Activated B cell treated with CpG ODN at 0.5 μM for 24 hours (primary cell): ENCODE measurements at regions of chr9 and their contacts with region 1.

Region 1: GRCh38 chr9:8924562-8924961 is 1125.0 kb upstream of the DMAC1 start:
- DNase-seq: no peak
- ATAC-seq: no peak
- H3K4me3 Mint-ChIP-seq: no peak overlapping the region
- H3K27ac Mint-ChIP-seq: no peak overlapping the region
- H3K4me1 Mint-ChIP-seq: no peaks in the 10 kb centered on the region
- H3K27me3 Mint-ChIP-seq: no peaks in the 10 kb centered on the region
- CTCF ChIP-seq: no peak

Region 2: DNA sequence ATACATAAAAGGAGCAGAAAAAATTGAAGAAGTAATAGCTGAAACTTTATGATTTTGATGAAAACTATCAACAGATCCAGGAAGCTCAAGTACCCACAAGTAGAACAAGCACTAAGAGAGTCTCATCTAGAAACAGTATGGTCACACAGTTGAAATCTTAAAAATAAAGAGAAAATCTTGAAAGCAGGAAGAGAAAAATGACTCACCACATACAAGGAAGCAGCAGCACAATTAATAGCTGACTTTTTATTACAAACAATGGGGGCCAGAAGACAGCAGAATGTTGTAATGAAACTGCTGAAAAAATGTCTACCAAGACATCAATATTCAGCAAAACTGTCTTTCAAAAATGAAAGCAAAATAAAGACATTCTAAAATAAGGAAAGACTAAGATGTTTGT is 16.7 kb before region 1 on chr9:
- CTCF ChIA-PET with region 1: no interaction called
- POLR2A ChIA-PET with region 1: no interaction called
- intact Hi-C with region 1: no loop called
- DNase-seq: no peak
- ATAC-seq: no peak
- H3K4me3 Mint-ChIP-seq: no peak overlapping the region
- H3K27ac Mint-ChIP-seq: no peak overlapping the region
- H3K4me1 Mint-ChIP-seq: no peaks in the 10 kb centered on the region
- H3K27me3 Mint-ChIP-seq: no peaks in the 10 kb centered on the region
- CTCF ChIP-seq: no peak

Region 3: GRCh38 chr9:8978334-8978733 is 53.8 kb after region 1 on chr9:
- CTCF ChIA-PET with region 1: no interaction called
- POLR2A ChIA-PET with region 1: no interaction called
- intact Hi-C with region 1: loop called (anchors 5 kb)
- DNase-seq: no peak
- ATAC-seq: no peak
- H3K4me3 Mint-ChIP-seq: no peak overlapping the region
- H3K27ac Mint-ChIP-seq: no peak overlapping the region
- H3K4me1 Mint-ChIP-seq: no peaks in the 10 kb centered on the region
- H3K27me3 Mint-ChIP-seq: no peaks in the 10 kb centered on the region
- CTCF ChIP-seq: no peak